ENCODE measurements at regions of chr13 and their contacts with region 1.

Region 1: DNA sequence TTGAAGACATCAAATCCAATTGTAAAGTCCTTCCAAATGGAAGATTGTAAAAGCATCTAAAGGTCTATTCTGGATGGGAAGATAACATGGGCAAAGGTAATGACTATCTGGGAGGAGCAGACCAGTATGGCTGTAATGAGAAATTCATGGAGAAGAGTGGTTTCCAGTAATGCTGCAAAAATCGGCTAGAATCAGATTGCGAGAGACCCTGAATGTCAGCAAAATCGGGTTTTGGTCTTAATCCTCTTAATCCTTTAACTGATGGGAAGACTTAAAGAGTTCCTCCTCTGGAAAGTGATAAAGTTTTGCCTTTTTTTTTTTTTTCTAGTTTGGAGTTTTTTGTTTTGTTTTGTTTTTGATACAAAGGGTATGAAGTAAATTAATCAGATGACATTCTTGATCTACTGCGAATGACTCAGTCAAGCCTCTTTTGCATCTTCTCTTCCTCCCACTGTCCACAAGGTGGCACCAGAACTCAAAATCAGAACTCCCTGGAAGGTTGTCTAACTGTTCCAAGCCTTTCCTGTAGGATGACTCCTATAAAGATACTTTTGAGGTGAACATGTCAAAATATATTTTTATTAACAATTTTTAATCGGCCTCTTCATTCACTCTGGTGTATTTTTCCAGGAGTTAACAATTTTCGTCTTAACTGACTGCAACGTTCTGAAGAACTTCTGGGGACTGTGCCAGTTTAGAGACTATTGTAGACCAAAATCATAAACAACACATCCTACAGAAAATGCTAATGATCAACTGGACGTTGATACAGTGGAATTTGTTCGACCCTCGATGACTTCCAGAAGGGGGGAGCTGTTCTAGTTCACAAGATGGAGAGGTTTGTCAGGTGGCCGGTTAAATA is 213.3 kb upstream of the MIR17HG start:
- DNase-seq: peak; percentile 74
- H3K4me3 Mint-ChIP-seq: no peak overlapping the region
- H3K27ac Mint-ChIP-seq: no peak overlapping the region
- H3K4me1 Mint-ChIP-seq: no peaks in the 10 kb centered on the region
- H3K27me3 Mint-ChIP-seq: no peaks in the 10 kb centered on the region

Region 2: GRCh38 chr13:91247768-91248167 is 113.6 kb after region 1 on chr13:
- intact Hi-C with region 1: loop called (anchors 1 kb)
- DNase-seq: no peak
- H3K4me3 Mint-ChIP-seq: no peak overlapping the region
- H3K27ac Mint-ChIP-seq: no peak overlapping the region
- H3K4me1 Mint-ChIP-seq: no peaks in the 10 kb centered on the region
- H3K27me3 Mint-ChIP-seq: peaks cover 5% of the 10 kb centered on the region

Region 3: GRCh38 chr13:91722267-91722884 is 588.2 kb after region 1 on chr13:
- intact Hi-C with region 1: loop called (anchors 1 kb)
- DNase-seq: no peak
- H3K4me3 Mint-ChIP-seq: no peak overlapping the region
- H3K27ac Mint-ChIP-seq: no peak overlapping the region
- H3K4me1 Mint-ChIP-seq: no peaks in the 10 kb centered on the region
- H3K27me3 Mint-ChIP-seq: no peaks in the 10 kb centered on the region

Measured in activated CD4-positive, alpha-beta T cell treated with anti-CD3 and anti-CD28 coated beads, Interleukin-2, amount 10 ng/mL, durations not matched to agents 24 days and 14 days (primary cell).